ENCODE measurements at regions of chr18 and their contacts with region 1.

Region 1: GRCh38 chr18:3771121-3771971 is 321.4 kb downstream of the TGIF1 start:
- DNase-seq: peak; percentile 96

Region 2: GRCh38 chr18:3995476-3996102 is 224.2 kb after region 1 on chr18:
- intact Hi-C with region 1: loop called in 1 of 2 experiments (anchors 10 kb)
- DNase-seq: no peak

Region 3: GRCh38 chr18:4093676-4094075 is 322.3 kb after region 1 on chr18:
- intact Hi-C with region 1: no loop called
- DNase-seq: no peak

Measured in posterior vena cava (tissue), 2 donors.